CD8-positive, alpha-beta T cell (primary cell): ENCODE measurements at regions of chr10 and their contacts with region 1.

Region 1: GRCh38 chr10:68550747-68551411 is 9.3 kb upstream of the TET1 start:
- DNase-seq: peak in 8 of 9 experiments; percentile 14 to 72 (median 33)
- ATAC-seq: peak; percentile 88
- H3K4me3 ChIP-seq: no peak overlapping the region
- H3K4me3 Mint-ChIP-seq: no peak overlapping the region
- H3K27ac ChIP-seq: no peak overlapping the region
- H3K27ac Mint-ChIP-seq: no peak overlapping the region
- H3K4me1 ChIP-seq: no peaks in the 10 kb centered on the region
- H3K4me1 Mint-ChIP-seq: no peaks in the 10 kb centered on the region
- H3K27me3 ChIP-seq: no peaks in the 10 kb centered on the region
- H3K27me3 Mint-ChIP-seq: no peaks in the 10 kb centered on the region
- CTCF ChIP-seq: peak; percentile 66

Region 2: DNA sequence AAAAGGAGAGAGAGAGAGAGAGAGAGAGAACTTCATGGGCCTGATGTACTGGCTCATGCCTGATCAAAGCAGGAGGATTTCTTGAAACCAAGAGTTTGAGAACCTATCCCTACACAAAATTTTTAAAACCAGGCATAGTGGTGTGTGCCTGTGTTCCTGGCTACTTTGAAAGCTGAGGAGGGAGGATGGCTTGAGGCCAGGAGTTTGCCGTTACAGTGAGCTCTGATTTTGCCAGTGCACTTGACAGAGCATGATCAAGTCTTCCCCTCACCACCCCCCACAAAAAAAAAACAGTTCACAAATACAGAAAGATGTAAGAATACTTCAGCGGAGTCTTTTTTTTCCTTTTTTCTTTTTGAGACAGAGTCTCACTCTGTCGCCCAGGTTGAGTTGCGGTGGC is 118.1 kb after region 1 on chr10:
- CTCF ChIA-PET with region 1: no interaction called
- POLR2A ChIA-PET with region 1: no interaction called
- intact Hi-C with region 1: no loop called
- DNase-seq: no peak
- ATAC-seq: no peak
- H3K4me3 ChIP-seq: no peak overlapping the region
- H3K4me3 Mint-ChIP-seq: no peak overlapping the region
- H3K27ac ChIP-seq: no peak overlapping the region
- H3K27ac Mint-ChIP-seq: no peak overlapping the region
- H3K4me1 ChIP-seq: no peaks in the 10 kb centered on the region
- H3K4me1 Mint-ChIP-seq: no peaks in the 10 kb centered on the region
- H3K27me3 ChIP-seq: no peaks in the 10 kb centered on the region
- H3K27me3 Mint-ChIP-seq: no peaks in the 10 kb centered on the region
- CTCF ChIP-seq: no peak

Region 3: GRCh38 chr10:68720793-68721672 is 170.2 kb after region 1 on chr10 and contains the start of gene CCAR1:
- CTCF ChIA-PET with region 1: interaction called, 6 read pairs
- POLR2A ChIA-PET with region 1: interaction called, 5 read pairs
- intact Hi-C with region 1: loop called (anchors 1 to 5 kb)
- DNase-seq: peak; percentile 92 to 99 (median 97)
- ATAC-seq: peak; percentile 95
- H3K4me3 ChIP-seq: peak within 1 kb of the TSS; percentile 87 to 98
- H3K4me3 Mint-ChIP-seq: peak within 1 kb of the TSS; percentile 100
- H3K27ac ChIP-seq: peak within 1 kb of the TSS; percentile 83 to 95
- H3K27ac Mint-ChIP-seq: peak within 1 kb of the TSS; percentile 99
- H3K4me1 ChIP-seq: peaks cover 10% of the 10 kb centered on the region
- H3K4me1 Mint-ChIP-seq: peaks cover 20% of the 10 kb centered on the region
- H3K27me3 ChIP-seq: no peaks in the 10 kb centered on the region
- H3K27me3 Mint-ChIP-seq: no peaks in the 10 kb centered on the region
- CTCF ChIP-seq: no peak
- total RNA-seq, gene CCAR1: 70.8 to 79.1 TPM